Esophagus squamous epithelium (tissue), 5 donors: ENCODE measurements at regions of chr6 and their contacts with region 1.

Region 1: GRCh38 chr6:27374824-27375612 is 13.5 kb upstream of the ZNF391 start:
- DNase-seq: no peak
- H3K4me3 ChIP-seq: peak overlapping the region; percentile 57 to 83 (median 80)
- H3K27ac ChIP-seq: peak overlapping the region; percentile 39 to 82 (median 74)
- H3K4me1 ChIP-seq: peaks cover 0 to 26% (median 0%) of the 10 kb centered on the region in 3 donors
- H3K27me3 ChIP-seq: no peaks in the 10 kb centered on the region
- CTCF ChIP-seq: no peak
- POLR2A ChIP-seq: peak in 1 of 4 donors; percentile 23

Region 2: GRCh38 chr6:27388293-27389197 is 13.5 kb after region 1 on chr6 and contains the start of gene ZNF391:
- intact Hi-C with region 1: loop called (anchors 2 kb)
- DNase-seq: no peak
- H3K4me3 ChIP-seq: peak within 1 kb of the TSS; percentile 54 to 77 (median 68)
- H3K27ac ChIP-seq: peak within 1 kb of the TSS; percentile 64 to 84 (median 74)
- H3K4me1 ChIP-seq: peaks cover 0 to 19% (median 9%) of the 10 kb centered on the region in 3 donors
- H3K27me3 ChIP-seq: peaks cover 0 to 3% (median 0%) of the 10 kb centered on the region in 4 donors
- CTCF ChIP-seq: no peak
- POLR2A ChIP-seq: peak in 1 of 4 donors; percentile 32
- total RNA-seq, gene ZNF391: 0.53 to 1.3 (median 0.97) TPM

Region 3: DNA sequence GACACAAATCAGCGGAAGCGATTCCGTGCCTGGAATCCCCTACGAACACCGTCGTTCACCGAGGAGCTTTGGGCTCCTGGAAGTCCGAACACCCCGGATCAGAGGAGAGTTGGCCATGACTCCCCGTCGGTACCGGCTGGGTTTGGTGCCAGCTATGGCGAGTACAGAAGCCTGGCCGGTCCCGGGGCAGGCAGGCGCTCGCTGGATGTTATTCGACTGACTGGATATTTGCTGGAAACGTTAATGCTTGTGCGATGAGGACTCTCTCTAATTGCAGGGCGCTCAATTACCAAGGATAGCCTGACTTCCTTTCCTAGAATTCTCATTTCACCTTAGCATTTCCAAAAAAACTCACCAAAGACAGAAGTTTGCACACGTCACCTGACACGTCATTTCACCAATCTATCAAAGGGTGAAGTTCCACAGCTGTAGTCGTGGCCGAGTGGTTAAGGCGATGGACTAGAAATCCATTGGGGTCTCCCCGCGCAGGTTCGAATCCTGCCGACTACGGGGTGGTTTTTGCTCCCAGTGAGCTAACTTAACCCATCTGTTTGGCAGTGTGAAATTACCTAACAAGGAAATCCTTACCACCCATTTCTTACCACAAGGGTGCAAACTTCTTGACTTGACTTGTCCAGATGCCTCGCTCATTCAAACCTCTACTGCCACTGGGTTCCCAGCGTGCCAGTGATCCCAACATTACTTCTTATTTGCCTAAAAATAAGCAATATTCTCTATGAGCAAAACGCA is 120.5 kb after region 1 on chr6:
- intact Hi-C with region 1: no loop called
- DNase-seq: no peak
- H3K4me3 ChIP-seq: peak overlapping the region; percentile 17 to 61 (median 39)
- H3K27ac ChIP-seq: no peak overlapping the region
- H3K4me1 ChIP-seq: peaks cover 0 to 12% (median 2%) of the 10 kb centered on the region in 3 donors
- H3K27me3 ChIP-seq: peaks cover 0 to 74% (median 2%) of the 10 kb centered on the region in 4 donors
- CTCF ChIP-seq: peak in 1 of 6 experiments; percentile 30
- POLR2A ChIP-seq: no peak